HepG2 (cell line): ENCODE measurements at regions of chr3 and their contacts with region 1.

Region 1: DNA sequence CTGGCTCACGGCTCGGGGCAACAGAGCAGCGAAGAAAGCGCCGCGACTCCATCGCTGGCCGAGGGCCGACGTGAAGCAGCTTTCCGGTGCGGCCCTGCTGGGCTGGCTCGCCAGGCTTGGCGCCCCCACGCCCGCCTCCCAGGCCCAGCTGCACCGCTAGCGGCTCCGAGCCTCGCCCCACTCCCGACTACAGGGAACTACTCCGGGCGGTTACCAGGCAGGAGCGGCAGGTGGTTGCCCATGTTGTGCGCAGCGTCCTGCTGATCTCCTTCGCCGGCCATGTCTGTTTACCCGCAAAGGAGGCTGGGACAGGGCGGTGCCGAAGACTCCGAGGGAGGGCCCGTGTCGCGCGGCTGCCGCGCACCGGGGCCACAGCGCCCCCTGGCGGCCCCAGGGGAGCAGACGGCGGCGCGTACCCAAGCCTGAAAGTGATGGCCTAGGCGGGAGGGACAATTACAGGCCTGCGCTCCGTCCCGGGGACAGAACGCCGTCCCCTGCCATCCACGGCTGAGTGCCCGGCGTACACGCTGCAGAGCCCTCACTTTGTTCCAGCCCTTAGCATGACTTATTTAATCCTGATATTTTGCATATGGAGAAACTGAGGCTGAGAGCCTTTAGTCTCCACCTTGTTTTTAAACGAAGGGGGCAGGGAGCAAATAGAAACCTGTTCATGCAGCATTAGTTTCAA is at the start of gene CRBN:
- DNase-seq: peak; percentile 76
- ATAC-seq: peak; percentile 99
- H3K4me3 ChIP-seq: peak within 1 kb of the TSS; percentile 90 to 99 (median 97)
- H3K27ac ChIP-seq: peak within 1 kb of the TSS; percentile 59
- H3K4me1 ChIP-seq: peaks cover 25% of the 10 kb centered on the region
- H3K27me3 ChIP-seq: no peaks in the 10 kb centered on the region; a peak in 1 of 5 replicates
- CTCF ChIP-seq: peak; percentile 97
- EP300 ChIP-seq: no peak; a peak in 1 of 4 replicates
- POLR2A ChIP-seq: peak; percentile 89 to 92
- RAD21 ChIP-seq: peak; percentile 69
- total RNA-seq, gene CRBN: 36.1 and 46.8 TPM in 2 replicates

Region 2: DNA sequence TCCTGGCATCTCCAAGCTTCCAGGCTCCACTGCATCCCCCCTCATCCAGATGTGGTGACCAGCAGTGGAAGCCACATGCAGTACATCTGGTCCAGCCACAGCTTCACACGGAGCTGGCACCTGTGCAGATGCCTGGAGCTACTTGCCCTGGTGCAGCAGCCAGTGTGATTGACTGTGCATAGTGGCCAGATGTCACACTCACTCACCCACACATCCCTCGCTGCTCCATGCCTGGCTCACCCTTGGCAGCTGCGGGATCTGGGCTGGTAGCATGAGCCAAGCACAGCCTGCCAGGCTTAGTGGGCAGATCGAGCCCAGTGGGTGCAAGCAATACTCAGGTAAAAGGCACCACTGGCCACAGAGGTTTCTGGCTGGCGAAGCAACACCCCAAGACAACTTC is 1478.9 kb before region 1 on chr3:
- CTCF ChIA-PET with region 1: no interaction called
- POLR2A ChIA-PET with region 1: no interaction called
- in situ Hi-C with region 1: no loop called
- intact Hi-C with region 1: loop called (anchors 10 kb)
- DNase-seq: no peak
- ATAC-seq: no peak
- H3K4me3 ChIP-seq: no peak overlapping the region
- H3K27ac ChIP-seq: no peak overlapping the region
- H3K4me1 ChIP-seq: no peaks in the 10 kb centered on the region
- H3K27me3 ChIP-seq: no peaks in the 10 kb centered on the region; a peak in 1 of 5 replicates
- CTCF ChIP-seq: no peak
- EP300 ChIP-seq: no peak
- POLR2A ChIP-seq: no peak
- RAD21 ChIP-seq: no peak

Region 3: GRCh38 chr3:3126477-3127431 is 52.8 kb before region 1 on chr3 and contains the start of gene TRNT1:
- CTCF ChIA-PET with region 1: no interaction called
- POLR2A ChIA-PET with region 1: no interaction called
- in situ Hi-C with region 1: no loop called
- intact Hi-C with region 1: loop called (anchors 1 kb)
- DNase-seq: peak; percentile 84
- ATAC-seq: peak; percentile 97
- H3K4me3 ChIP-seq: peak within 1 kb of the TSS; percentile 79 to 99 (median 91)
- H3K27ac ChIP-seq: peak within 1 kb of the TSS; percentile 77
- H3K4me1 ChIP-seq: peaks cover 32% of the 10 kb centered on the region
- H3K27me3 ChIP-seq: no peaks in the 10 kb centered on the region; a peak in 1 of 5 replicates
- CTCF ChIP-seq: no peak
- EP300 ChIP-seq: no peak
- POLR2A ChIP-seq: peak; percentile 89 to 93
- RAD21 ChIP-seq: peak; percentile 26
- total RNA-seq, gene TRNT1: 27.7 and 31.1 TPM in 2 replicates

Region 4: DNA sequence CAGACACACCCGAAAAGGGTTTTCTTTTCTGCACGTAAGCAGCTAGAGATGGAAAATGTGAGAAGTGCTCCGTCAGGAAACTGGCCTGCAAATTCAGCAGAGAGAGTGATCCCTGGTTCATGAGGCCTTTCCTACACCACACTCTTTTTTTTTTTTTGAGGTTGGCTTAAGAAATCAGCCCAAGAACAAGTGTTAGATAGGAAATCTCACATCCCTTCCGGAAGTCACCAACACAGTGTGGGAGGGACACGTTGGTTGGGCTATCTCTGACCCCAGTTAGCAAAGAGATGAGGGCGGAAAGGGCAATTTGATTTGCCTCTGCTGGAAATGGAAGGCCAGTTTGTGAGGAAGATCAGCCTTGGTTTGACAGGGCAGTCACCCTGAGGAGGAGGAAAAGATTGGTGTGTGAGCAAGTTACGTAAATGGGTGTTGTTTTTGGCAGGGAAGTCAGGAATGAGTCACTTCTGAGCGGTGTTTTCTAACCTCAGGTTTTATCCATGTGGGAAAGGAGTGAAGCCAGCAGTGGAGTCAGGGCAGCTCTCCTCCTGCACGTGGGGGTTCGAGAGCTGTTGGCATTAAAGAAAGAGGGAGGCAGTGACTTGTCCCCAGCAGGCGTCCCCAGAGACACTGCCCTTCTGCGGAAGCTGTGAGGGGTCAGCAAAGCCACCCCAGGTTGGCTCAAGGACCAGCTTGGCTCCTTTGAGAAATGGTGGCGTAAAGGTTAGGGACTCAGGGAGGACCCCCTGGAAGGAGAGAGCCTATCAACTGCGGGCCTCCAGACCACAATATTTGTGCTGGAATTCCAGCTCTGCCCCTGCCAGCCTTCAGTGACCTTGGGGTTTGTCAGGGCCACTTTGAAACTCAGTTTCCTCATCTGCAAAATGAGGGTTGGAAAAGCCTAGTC is 1562.1 kb after region 1 on chr3:
- CTCF ChIA-PET with region 1: no interaction called
- POLR2A ChIA-PET with region 1: no interaction called
- in situ Hi-C with region 1: no loop called
- intact Hi-C with region 1: loop called (anchors 10 kb)
- DNase-seq: peak; percentile 45
- ATAC-seq: no peak
- H3K4me3 ChIP-seq: no peak overlapping the region
- H3K27ac ChIP-seq: no peak overlapping the region
- H3K4me1 ChIP-seq: peaks cover 52% of the 10 kb centered on the region
- H3K27me3 ChIP-seq: no peaks in the 10 kb centered on the region
- CTCF ChIP-seq: no peak
- EP300 ChIP-seq: no peak
- POLR2A ChIP-seq: no peak
- RAD21 ChIP-seq: no peak